ENCODE measurements at regions of chr17 and their contacts with region 1.

Region 1: GRCh38 chr17:40791787-40792436 is 7.8 kb downstream of the KRT28 start:
- DNase-seq: no peak
- H3K4me3 Mint-ChIP-seq: no peak overlapping the region
- H3K27ac Mint-ChIP-seq: no peak overlapping the region
- H3K4me1 Mint-ChIP-seq: no peaks in the 10 kb centered on the region
- H3K27me3 Mint-ChIP-seq: peaks cover 21% of the 10 kb centered on the region

Region 2: DNA sequence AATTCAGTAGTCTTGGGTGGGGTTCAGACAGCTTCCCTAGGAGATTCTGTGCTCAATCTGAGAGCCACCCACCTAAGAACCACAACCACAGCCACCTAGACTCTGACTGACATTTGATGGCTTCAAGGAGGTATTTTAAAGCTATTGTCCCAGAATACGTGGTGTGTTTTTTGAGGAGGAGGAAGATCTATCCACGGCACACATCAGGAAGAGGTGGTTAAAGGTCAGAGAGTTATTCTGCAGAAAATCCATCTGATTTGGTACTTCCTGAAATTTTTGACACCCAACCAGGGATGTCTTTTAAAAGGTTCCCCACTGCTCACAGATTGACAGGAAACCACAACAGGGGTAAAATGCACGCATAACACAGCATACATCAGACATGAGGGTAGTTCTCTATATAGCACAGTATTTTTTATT is 169.4 kb before region 1 on chr17:
- CTCF ChIA-PET with region 1: no interaction called
- POLR2A ChIA-PET with region 1: no interaction called
- intact Hi-C with region 1: loop called (anchors 5 kb)
- DNase-seq: peak; percentile 38
- H3K4me3 Mint-ChIP-seq: no peak overlapping the region
- H3K27ac Mint-ChIP-seq: no peak overlapping the region
- H3K4me1 Mint-ChIP-seq: peaks cover 60% of the 10 kb centered on the region
- H3K27me3 Mint-ChIP-seq: no peaks in the 10 kb centered on the region

Measured in activated CD4-positive, alpha-beta memory T cell treated with anti-CD3 and anti-CD28 coated beads for 36 hours (primary cell).